ENCODE measurements at regions of chr12 and their contacts with region 1.

Region 1: DNA sequence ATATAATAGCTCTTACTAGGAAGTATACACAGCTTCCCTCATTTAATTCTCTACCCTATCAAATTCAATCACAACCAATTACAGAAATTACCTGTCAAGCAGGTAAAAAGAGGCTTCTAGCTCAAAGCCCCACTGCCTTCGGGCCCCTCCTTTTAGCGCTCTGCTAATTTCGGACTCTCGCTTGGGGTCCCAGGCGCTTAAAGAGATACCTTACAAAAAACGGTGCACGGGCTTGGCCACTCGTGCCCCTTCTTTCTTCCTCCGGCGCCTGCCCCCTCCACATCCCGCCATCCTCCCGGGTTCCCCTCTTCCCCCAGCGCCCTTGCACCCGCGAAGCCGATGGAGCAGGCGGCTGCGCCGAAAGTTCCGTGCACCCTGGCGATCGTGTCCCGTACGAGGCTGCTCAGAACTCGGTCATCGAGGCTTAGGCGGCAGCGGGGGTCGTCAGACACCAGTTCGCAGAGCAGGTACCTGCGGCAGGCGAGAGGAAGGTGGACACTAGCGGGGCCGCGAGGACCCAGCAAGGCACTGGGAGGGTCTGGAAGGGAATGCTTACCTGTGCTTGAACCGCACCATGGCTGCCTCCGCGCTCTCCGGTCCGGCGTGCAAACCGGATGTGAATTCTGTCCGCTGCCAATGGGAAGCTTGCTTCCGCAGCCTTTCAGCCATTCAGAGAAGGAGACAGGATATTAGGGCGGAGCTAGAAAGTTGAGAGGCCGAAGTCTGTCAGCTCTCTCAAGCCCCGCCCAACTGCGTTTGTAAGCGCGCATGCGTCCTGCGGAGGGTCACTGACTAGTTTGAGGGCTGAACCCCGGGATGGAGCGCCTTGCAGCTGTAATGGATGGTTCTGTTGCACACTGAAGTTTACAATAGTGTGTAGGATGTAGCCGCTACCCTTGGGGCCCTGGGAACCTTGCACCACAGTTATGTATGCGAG is at the start of gene POP5:
- DNase-seq: peak; percentile 86
- ATAC-seq: peak; percentile 96
- H3K4me3 ChIP-seq: peak within 1 kb of the TSS; percentile 90 to 94
- H3K27ac ChIP-seq: peak within 1 kb of the TSS; percentile 90
- H3K4me1 ChIP-seq: peaks cover 14% of the 10 kb centered on the region; the same call in 1 of the 2 replicates
- H3K27me3 ChIP-seq: no peaks in the 10 kb centered on the region
- CTCF ChIP-seq: no peak
- total RNA-seq, gene POP5: 43.7 TPM

Region 2: GRCh38 chr12:120649442-120650232 is 68.6 kb after region 1 on chr12:
- CTCF ChIA-PET with region 1: interaction called, 23 read pairs
- POLR2A ChIA-PET with region 1: no interaction called
- in situ Hi-C with region 1: no loop called
- intact Hi-C with region 1: loop called (anchors 2 kb)
- DNase-seq: no peak
- ATAC-seq: no peak
- H3K4me3 ChIP-seq: peak overlapping the region in 1 of 2 experiments; percentile 23; a peak in 2 of 4 replicates
- H3K27ac ChIP-seq: no peak overlapping the region
- H3K4me1 ChIP-seq: peaks cover 8% of the 10 kb centered on the region
- H3K27me3 ChIP-seq: peaks cover 4% of the 10 kb centered on the region
- CTCF ChIP-seq: no peak; the same call in none of the 2 replicates

Region 3: GRCh38 chr12:120710031-120710804 is 129.2 kb after region 1 on chr12 and contains the start of gene UNC119B:
- CTCF ChIA-PET with region 1: no interaction called
- POLR2A ChIA-PET with region 1: no interaction called
- in situ Hi-C with region 1: no loop called
- intact Hi-C with region 1: loop called (anchors 2 kb)
- DNase-seq: no peak
- ATAC-seq: peak; percentile 94
- H3K4me3 ChIP-seq: peak within 1 kb of the TSS; percentile 77 to 86
- H3K27ac ChIP-seq: peak within 1 kb of the TSS; percentile 80
- H3K4me1 ChIP-seq: peaks cover 15% of the 10 kb centered on the region
- H3K27me3 ChIP-seq: no peaks in the 10 kb centered on the region
- CTCF ChIP-seq: no peak
- total RNA-seq, gene UNC119B: 26.0 TPM

Region 4: DNA sequence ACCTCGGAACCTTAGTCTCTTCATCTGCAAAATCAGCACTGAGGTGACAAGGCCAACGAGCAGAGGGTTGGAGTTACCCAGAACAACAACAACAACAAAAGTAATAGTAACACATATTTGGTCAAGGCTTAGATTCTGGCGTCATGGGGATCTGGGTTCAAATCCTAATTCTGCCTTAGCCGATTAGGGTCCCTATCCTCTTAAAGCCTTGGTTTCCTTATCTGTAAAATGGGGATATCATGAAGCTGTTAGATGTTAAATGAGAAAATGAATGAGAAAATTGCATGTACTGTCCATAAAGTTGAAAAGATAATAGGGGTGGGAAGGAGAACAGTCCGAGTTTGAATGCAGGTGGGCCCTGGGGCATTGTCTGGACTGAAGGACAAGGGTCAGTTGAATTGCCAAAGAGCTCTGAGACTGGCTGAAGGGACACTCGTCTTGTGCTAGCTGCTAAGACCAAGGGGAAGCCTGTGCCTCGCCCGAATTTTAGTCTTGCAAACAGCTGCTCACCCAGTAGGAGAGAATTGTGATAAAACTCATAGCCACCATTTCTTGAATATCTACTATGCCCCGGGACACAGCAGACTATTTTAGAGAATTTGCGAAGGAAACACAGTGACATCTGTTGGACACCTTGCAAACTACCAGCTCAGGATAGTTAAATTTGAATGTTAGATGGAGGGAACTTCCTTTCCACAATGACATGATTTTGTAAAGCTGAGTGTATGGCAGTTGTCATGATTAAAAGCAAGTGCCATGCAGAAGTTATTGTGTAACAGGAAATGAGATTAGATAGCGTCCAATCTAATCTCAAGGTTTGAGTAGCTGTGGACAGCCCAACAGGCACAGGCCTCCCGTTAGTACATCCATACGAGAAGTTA is 390.5 kb after region 1 on chr12:
- CTCF ChIA-PET with region 1: no interaction called
- POLR2A ChIA-PET with region 1: interaction called, 7 read pairs
- in situ Hi-C with region 1: no loop called
- intact Hi-C with region 1: loop called (anchors 5 kb)
- DNase-seq: peak; percentile 52
- ATAC-seq: peak; percentile 89
- H3K4me3 ChIP-seq: no peak overlapping the region
- H3K27ac ChIP-seq: no peak overlapping the region
- H3K4me1 ChIP-seq: peaks cover 4% of the 10 kb centered on the region; the same call in 1 of the 2 replicates
- H3K27me3 ChIP-seq: no peaks in the 10 kb centered on the region
- CTCF ChIP-seq: no peak; the same call in none of the 2 replicates

Measured in Panc1 (cell line).